CD4-positive, alpha-beta T cell (primary cell): ENCODE measurements at regions of chr6 and their contacts with region 1.

Region 1: DNA sequence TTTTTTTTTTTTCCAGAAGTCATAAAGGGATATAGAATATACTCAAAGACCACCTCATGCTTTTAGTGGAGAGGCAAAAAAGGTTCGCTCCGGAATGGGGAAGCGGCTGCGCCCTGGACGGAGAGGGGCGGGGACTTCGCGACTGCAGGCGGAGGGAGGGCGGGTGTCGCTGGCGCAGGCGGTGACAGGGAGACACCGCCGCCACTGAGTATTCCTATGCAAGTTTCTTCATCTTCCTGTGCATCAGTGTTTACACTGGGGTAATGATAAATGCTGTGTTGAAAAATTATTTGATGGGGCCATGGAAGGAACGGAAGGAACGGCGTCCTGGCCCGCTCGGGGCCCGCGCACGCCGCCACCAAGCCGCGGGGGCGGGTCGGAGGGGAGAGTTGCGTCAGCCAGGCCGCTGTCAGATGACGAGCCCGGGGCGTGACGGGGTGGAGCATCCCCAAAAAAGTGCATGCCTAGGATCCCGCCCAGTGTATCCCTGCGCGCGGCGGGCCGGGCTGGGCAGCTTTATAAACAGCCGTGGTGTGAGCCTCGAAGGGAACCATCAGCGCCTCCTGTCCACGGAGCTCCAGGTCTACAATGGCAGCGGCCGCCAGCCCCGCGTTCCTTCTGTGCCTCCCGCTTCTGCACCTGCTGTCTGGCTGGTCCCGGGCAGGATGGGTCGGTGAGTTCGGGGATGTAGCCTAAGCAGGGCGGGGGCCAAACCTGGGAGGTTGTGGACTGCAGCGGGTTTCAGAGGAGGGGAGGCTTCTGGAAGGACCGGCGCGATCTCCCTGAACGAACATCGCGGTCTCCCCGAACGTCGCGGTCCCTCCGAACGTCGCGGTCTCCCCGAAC is at the start of gene ULBP1:
- DNase-seq: peak in 13 of 14 experiments; percentile 43 to 85 (median 65)
- ATAC-seq: peak; percentile 71
- H3K4me3 ChIP-seq: peak within 1 kb of the TSS; percentile 55
- H3K4me3 Mint-ChIP-seq: peak within 1 kb of the TSS; percentile 95
- H3K27ac ChIP-seq: no peak within 1 kb of the TSS
- H3K27ac Mint-ChIP-seq: peak within 1 kb of the TSS; percentile 55
- H3K4me1 ChIP-seq: peaks cover 31% of the 10 kb centered on the region
- H3K4me1 Mint-ChIP-seq: peaks cover 28% of the 10 kb centered on the region
- H3K27me3 ChIP-seq: peaks cover 64 to 65% of the 10 kb centered on the region in 2 experiments
- H3K27me3 Mint-ChIP-seq: peaks cover 97% of the 10 kb centered on the region
- CTCF ChIP-seq: no peak
- total RNA-seq, gene ULBP1: 0.08 to 0.14 TPM

Region 2: DNA sequence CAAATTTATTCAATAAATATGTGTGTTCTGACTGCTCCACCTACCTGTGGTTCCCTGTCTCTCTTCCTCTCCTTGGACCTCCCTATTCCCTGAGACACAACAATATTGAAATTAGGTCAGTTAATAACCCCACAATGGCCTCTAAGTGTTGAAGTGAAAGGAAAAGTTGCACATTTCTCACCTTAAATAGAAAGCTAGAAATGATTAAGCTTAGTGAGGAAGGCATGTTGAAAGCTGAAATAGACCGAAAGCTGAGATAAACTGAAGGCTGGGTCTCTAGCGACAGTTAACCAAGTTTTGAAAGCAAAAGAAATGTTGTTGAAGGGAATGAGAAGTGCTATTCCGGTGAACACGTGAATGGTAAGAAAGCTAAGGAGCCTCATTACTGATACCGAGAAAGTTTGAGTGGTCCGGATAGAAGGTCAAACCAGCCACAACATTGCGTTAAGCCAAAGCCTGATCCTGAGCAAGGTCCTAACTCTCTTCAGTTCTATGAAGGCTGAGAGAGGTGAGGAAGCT is 1182.7 kb before region 1 on chr6:
- CTCF ChIA-PET with region 1: no interaction called
- POLR2A ChIA-PET with region 1: no interaction called
- intact Hi-C with region 1: no loop called
- DNase-seq: peak in 2 of 14 experiments; percentile 17 to 42
- ATAC-seq: peak; percentile 34
- H3K4me3 ChIP-seq: peak overlapping the region; percentile 31
- H3K4me3 Mint-ChIP-seq: peak overlapping the region; percentile 58
- H3K27ac ChIP-seq: peak overlapping the region in 1 of 2 donors; percentile 30
- H3K27ac Mint-ChIP-seq: peak overlapping the region; percentile 27
- H3K4me1 ChIP-seq: peaks cover 9% of the 10 kb centered on the region
- H3K4me1 Mint-ChIP-seq: peaks cover 16% of the 10 kb centered on the region
- H3K27me3 ChIP-seq: no peaks in the 10 kb centered on the region
- H3K27me3 Mint-ChIP-seq: no peaks in the 10 kb centered on the region
- CTCF ChIP-seq: no peak

Region 3: GRCh38 chr6:149863697-149864577 is 99.7 kb before region 1 on chr6 and contains the start of gene LRP11:
- CTCF ChIA-PET with region 1: no interaction called
- POLR2A ChIA-PET with region 1: no interaction called
- intact Hi-C with region 1: no loop called
- DNase-seq: peak; percentile 66 to 91 (median 80)
- ATAC-seq: peak; percentile 87
- H3K4me3 ChIP-seq: peak within 1 kb of the TSS; percentile 54
- H3K4me3 Mint-ChIP-seq: peak within 1 kb of the TSS; percentile 86
- H3K27ac ChIP-seq: no peak within 1 kb of the TSS
- H3K27ac Mint-ChIP-seq: peak within 1 kb of the TSS; percentile 68
- H3K4me1 ChIP-seq: peaks cover 18% of the 10 kb centered on the region
- H3K4me1 Mint-ChIP-seq: peaks cover 5% of the 10 kb centered on the region
- H3K27me3 ChIP-seq: peaks cover 0 to 3% of the 10 kb centered on the region in 2 experiments
- H3K27me3 Mint-ChIP-seq: peaks cover 22% of the 10 kb centered on the region
- CTCF ChIP-seq: no peak
- total RNA-seq, gene LRP11: 0.75 to 0.99 TPM

Region 4: GRCh38 chr6:149934249-149935156 is 29.2 kb before region 1 on chr6:
- CTCF ChIA-PET with region 1: interaction called, 3 read pairs
- POLR2A ChIA-PET with region 1: no interaction called
- intact Hi-C with region 1: loop called in 1 of 2 experiments (anchors 1 kb)
- DNase-seq: peak; percentile 50 to 88 (median 66)
- ATAC-seq: peak; percentile 67
- H3K4me3 ChIP-seq: no peak overlapping the region
- H3K4me3 Mint-ChIP-seq: peak overlapping the region; percentile 7
- H3K27ac ChIP-seq: no peak overlapping the region
- H3K27ac Mint-ChIP-seq: no peak overlapping the region
- H3K4me1 ChIP-seq: peaks cover 20% of the 10 kb centered on the region
- H3K4me1 Mint-ChIP-seq: peaks cover 14% of the 10 kb centered on the region
- H3K27me3 ChIP-seq: peaks cover 56 to 85% of the 10 kb centered on the region in 2 experiments
- H3K27me3 Mint-ChIP-seq: peaks cover 91% of the 10 kb centered on the region
- CTCF ChIP-seq: peak; percentile 89

Region 5: GRCh38 chr6:150004783-150005717 is 41.4 kb after region 1 on chr6:
- CTCF ChIA-PET with region 1: no interaction called
- POLR2A ChIA-PET with region 1: no interaction called
- intact Hi-C with region 1: loop called in 1 of 2 experiments (anchors 5 kb)
- DNase-seq: peak; percentile 65 to 95 (median 86)
- ATAC-seq: peak; percentile 77
- H3K4me3 ChIP-seq: peak overlapping the region; percentile 86
- H3K4me3 Mint-ChIP-seq: peak overlapping the region; percentile 87
- H3K27ac ChIP-seq: peak overlapping the region; percentile 75 to 89
- H3K27ac Mint-ChIP-seq: peak overlapping the region; percentile 74
- H3K4me1 ChIP-seq: peaks cover 49% of the 10 kb centered on the region
- H3K4me1 Mint-ChIP-seq: peaks cover 29% of the 10 kb centered on the region
- H3K27me3 ChIP-seq: peaks cover 6 to 15% of the 10 kb centered on the region in 2 experiments
- H3K27me3 Mint-ChIP-seq: peaks cover 24% of the 10 kb centered on the region
- CTCF ChIP-seq: no peak

Region 6: DNA sequence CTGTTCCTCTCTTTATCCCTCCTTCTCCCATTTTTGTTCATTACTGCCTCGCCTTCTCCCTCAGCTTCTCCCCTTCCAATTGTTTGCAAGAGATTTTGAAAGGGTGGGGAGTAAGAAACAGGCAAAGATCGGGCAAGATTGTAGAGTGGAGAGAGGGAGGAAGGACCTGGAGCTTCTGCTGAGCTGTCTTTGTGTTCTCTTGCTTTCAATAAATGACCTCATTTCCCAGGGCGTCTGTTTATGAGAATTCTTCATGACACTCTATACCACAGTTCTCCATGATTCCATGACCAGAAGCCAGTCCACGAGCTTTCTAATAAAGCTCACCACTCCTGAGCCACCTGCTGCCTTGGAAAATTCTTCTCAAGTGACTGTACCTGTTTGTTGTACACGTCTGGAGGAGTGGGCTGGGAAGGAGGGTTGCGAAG is 586.0 kb after region 1 on chr6:
- CTCF ChIA-PET with region 1: no interaction called
- POLR2A ChIA-PET with region 1: no interaction called
- intact Hi-C with region 1: no loop called
- DNase-seq: no peak
- ATAC-seq: no peak
- H3K4me3 ChIP-seq: no peak overlapping the region
- H3K4me3 Mint-ChIP-seq: no peak overlapping the region
- H3K27ac ChIP-seq: no peak overlapping the region
- H3K27ac Mint-ChIP-seq: no peak overlapping the region
- H3K4me1 ChIP-seq: no peaks in the 10 kb centered on the region
- H3K4me1 Mint-ChIP-seq: no peaks in the 10 kb centered on the region
- H3K27me3 ChIP-seq: peaks cover 0 to 6% of the 10 kb centered on the region in 2 experiments
- H3K27me3 Mint-ChIP-seq: peaks cover 14% of the 10 kb centered on the region
- CTCF ChIP-seq: no peak